CD8-positive, alpha-beta T cell (primary cell): ENCODE measurements at regions of chr22 and their contacts with region 1.

Region 1: GRCh38 chr22:39319270-39320022 is at the start of gene RPL3:
- DNase-seq: peak; percentile 96 to 100 (median 98)
- ATAC-seq: peak; percentile 85
- H3K4me3 ChIP-seq: peak within 1 kb of the TSS; percentile 91 to 99
- H3K4me3 Mint-ChIP-seq: peak within 1 kb of the TSS; percentile 96
- H3K27ac ChIP-seq: peak within 1 kb of the TSS; percentile 81 to 90
- H3K27ac Mint-ChIP-seq: peak within 1 kb of the TSS; percentile 96
- H3K4me1 ChIP-seq: peaks cover 45% of the 10 kb centered on the region
- H3K4me1 Mint-ChIP-seq: peaks cover 46% of the 10 kb centered on the region
- H3K27me3 ChIP-seq: no peaks in the 10 kb centered on the region
- H3K27me3 Mint-ChIP-seq: no peaks in the 10 kb centered on the region
- CTCF ChIP-seq: no peak
- total RNA-seq, gene RPL3: 3,777 to 3,874 TPM

Region 2: GRCh38 chr22:38398609-38399461 is 920.6 kb before region 1 on chr22:
- CTCF ChIA-PET with region 1: no interaction called
- POLR2A ChIA-PET with region 1: no interaction called
- intact Hi-C with region 1: loop called in 1 of 2 experiments (anchors 10 kb)
- DNase-seq: peak; percentile 67 to 91 (median 82)
- ATAC-seq: peak; percentile 79
- H3K4me3 ChIP-seq: peak overlapping the region; percentile 55 to 60
- H3K4me3 Mint-ChIP-seq: peak overlapping the region; percentile 81
- H3K27ac ChIP-seq: peak overlapping the region in 1 of 2 experiments; percentile 30
- H3K27ac Mint-ChIP-seq: no peak overlapping the region
- H3K4me1 ChIP-seq: no peaks in the 10 kb centered on the region
- H3K4me1 Mint-ChIP-seq: peaks cover 18% of the 10 kb centered on the region
- H3K27me3 ChIP-seq: no peaks in the 10 kb centered on the region
- H3K27me3 Mint-ChIP-seq: no peaks in the 10 kb centered on the region
- CTCF ChIP-seq: no peak

Region 3: GRCh38 chr22:38802671-38803121 is 516.8 kb before region 1 on chr22:
- CTCF ChIA-PET with region 1: no interaction called
- POLR2A ChIA-PET with region 1: no interaction called
- intact Hi-C with region 1: no loop called
- DNase-seq: no peak
- ATAC-seq: no peak
- H3K4me3 ChIP-seq: no peak overlapping the region
- H3K4me3 Mint-ChIP-seq: no peak overlapping the region
- H3K27ac ChIP-seq: no peak overlapping the region
- H3K27ac Mint-ChIP-seq: no peak overlapping the region
- H3K4me1 ChIP-seq: peaks cover 14% of the 10 kb centered on the region
- H3K4me1 Mint-ChIP-seq: peaks cover 16% of the 10 kb centered on the region
- H3K27me3 ChIP-seq: no peaks in the 10 kb centered on the region
- H3K27me3 Mint-ChIP-seq: peaks cover 15% of the 10 kb centered on the region
- CTCF ChIP-seq: no peak

Region 4: DNA sequence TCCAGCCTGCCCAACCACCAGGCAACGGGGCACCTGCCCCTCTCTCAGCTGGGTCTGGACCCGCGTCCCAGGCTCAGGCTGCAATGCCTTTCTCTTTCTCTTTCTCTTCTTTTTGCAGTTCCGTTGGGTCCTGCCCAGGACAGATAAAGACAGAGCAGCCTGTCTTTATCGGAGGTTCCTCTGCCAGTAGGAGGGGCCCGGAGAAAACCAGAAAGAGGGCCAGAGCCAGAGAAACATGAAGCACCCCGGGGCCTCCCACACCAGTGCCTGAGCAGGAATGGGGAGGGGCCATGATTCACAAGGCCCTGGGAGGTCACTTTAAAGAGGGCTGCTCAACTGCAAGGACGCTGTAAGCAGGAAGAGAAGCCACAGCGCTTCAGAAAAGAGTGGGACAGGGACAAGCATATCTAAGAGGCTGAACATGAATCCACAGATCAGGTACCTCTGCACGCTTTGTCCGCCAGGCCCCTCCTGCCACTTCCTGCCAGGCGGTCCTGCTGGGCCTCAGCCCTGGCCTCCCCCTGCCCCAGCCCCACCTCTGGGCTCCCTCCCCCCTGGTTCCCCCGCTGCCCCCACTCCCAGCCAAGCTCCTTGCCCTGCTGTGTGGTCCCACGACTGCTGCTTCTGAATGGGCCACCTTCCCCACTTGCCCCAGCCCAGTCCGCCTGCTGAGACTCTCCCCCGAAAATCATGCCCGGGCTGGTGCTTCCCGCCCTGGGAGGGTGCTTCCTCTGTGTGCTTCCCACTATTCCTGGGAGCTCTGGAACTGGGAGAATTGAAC is 305.3 kb before region 1 on chr22 and contains the start of gene APOBEC3C:
- CTCF ChIA-PET with region 1: interaction called, 3 read pairs
- POLR2A ChIA-PET with region 1: interaction called, 3 read pairs
- intact Hi-C with region 1: loop called in 1 of 2 experiments (anchors 5 kb)
- DNase-seq: peak; percentile 35 to 89 (median 78)
- ATAC-seq: peak; percentile 89
- H3K4me3 ChIP-seq: peak within 1 kb of the TSS; percentile 47 to 62
- H3K4me3 Mint-ChIP-seq: peak within 1 kb of the TSS; percentile 88
- H3K27ac ChIP-seq: peak within 1 kb of the TSS; percentile 33 to 83
- H3K27ac Mint-ChIP-seq: peak within 1 kb of the TSS; percentile 91
- H3K4me1 ChIP-seq: peaks cover 18% of the 10 kb centered on the region
- H3K4me1 Mint-ChIP-seq: peaks cover 36% of the 10 kb centered on the region
- H3K27me3 ChIP-seq: no peaks in the 10 kb centered on the region
- H3K27me3 Mint-ChIP-seq: no peaks in the 10 kb centered on the region
- CTCF ChIP-seq: no peak
- total RNA-seq, gene APOBEC3C: 14.1 to 15.8 TPM

Region 5: DNA sequence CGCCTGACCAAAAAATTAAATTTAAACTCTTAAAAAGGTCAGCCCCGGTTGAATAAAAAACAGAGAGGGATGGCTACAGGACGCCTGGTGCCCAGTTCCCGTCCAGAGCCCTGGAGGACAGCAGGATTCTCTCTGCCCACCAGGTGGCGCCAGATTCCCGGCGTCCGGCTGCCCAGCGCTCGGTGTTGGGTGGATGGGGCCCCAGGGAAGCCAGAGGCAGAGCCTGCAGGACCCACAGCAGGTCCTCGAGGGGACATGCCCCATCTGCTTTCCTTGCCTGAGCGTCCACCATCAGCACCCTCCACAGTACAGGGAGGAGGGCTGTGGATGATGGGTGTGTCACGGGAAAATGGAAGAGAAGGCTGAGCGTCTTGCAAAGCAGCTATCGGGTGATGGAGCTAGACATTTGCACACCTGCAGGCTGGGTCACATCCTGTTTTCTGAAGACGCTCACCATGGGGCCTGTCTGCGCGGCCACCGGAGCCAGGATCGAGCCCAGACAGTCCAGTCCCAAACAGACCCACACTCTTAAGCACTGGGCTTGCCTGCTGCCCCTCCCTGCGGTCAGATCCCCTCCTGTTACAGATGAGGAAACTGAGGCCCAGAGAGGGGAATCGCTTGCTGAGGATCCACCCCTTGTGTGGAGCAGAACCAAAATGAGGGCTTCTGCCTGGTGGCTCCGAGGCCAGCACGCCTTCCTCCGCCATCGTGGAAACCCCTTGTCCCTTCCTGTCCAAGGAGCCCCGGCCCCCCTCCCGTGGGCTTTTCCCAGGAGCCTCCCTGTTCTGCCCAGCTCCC is 148.4 kb before region 1 on chr22:
- CTCF ChIA-PET with region 1: interaction called, 386 read pairs
- POLR2A ChIA-PET with region 1: interaction called, 160 read pairs
- intact Hi-C with region 1: loop called (anchors 1 kb)
- DNase-seq: peak; percentile 73 to 95 (median 85)
- ATAC-seq: peak; percentile 57
- H3K4me3 ChIP-seq: peak overlapping the region; percentile 26 to 28
- H3K4me3 Mint-ChIP-seq: peak overlapping the region; percentile 54
- H3K27ac ChIP-seq: peak overlapping the region; percentile 25 to 42
- H3K27ac Mint-ChIP-seq: peak overlapping the region; percentile 94
- H3K4me1 ChIP-seq: peaks cover 49% of the 10 kb centered on the region
- H3K4me1 Mint-ChIP-seq: peaks cover 47% of the 10 kb centered on the region
- H3K27me3 ChIP-seq: peaks cover 0 to 3% of the 10 kb centered on the region in 2 experiments
- H3K27me3 Mint-ChIP-seq: no peaks in the 10 kb centered on the region
- CTCF ChIP-seq: peak; percentile 98

Region 6: DNA sequence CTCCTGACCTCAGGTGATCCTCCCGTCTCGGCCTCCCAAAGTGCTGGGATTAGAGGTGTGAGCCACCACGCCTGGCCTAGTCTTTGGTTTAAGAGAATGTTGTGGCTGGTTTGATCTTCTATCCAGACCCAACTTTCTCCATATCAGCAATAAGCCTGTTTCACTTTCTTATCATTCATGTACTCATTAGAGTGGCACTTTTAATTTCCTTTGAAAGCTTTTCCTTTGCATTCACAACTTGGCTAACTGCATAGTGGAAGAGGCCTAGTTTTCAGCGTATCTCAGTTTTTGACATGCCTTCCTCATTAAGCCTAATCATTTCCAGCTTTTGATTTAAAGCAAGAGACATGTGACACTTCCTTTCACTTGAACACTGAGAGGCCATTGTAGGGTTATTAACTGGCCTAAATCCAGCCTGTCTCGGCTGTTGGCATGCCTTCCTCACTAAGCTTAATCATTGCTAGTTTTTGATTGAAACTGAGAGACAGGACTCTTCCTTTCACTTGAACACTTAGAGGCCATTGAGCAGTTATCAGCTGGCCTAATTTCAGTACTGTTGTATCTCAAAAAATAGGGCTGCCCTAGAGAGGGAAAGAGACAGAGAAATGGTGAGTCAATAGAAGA is 13.1 kb after region 1 on chr22:
- CTCF ChIA-PET with region 1: interaction called, 9 read pairs
- POLR2A ChIA-PET with region 1: interaction called, 12 read pairs
- intact Hi-C with region 1: no loop called
- DNase-seq: no peak
- ATAC-seq: no peak
- H3K4me3 ChIP-seq: no peak overlapping the region
- H3K4me3 Mint-ChIP-seq: no peak overlapping the region
- H3K27ac ChIP-seq: no peak overlapping the region
- H3K27ac Mint-ChIP-seq: no peak overlapping the region
- H3K4me1 ChIP-seq: no peaks in the 10 kb centered on the region
- H3K4me1 Mint-ChIP-seq: peaks cover 7% of the 10 kb centered on the region
- H3K27me3 ChIP-seq: no peaks in the 10 kb centered on the region
- H3K27me3 Mint-ChIP-seq: no peaks in the 10 kb centered on the region
- CTCF ChIP-seq: no peak

Region 7: DNA sequence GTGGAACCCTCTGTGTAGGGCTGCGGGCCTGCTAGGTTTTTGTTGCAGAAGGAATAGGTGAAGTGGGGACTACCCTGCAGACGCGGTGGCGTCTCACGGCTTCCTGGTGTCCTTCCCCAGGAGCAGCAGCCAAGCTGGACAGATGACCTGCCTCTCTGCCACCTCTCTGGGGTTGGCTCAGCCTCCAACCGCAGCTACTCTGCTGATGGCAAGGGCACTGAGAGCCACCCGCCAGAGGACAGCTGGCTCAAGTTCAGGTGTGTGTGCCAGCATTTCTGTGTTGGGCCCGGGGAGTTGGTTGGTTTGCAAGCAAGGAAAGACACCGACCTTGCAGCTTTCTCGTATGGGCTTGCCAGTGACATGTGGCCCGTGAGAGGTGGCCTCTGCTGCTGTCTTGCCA is 95.4 kb after region 1 on chr22:
- CTCF ChIA-PET with region 1: no interaction called
- POLR2A ChIA-PET with region 1: interaction called, 16 read pairs
- intact Hi-C with region 1: no loop called
- DNase-seq: no peak
- ATAC-seq: no peak
- H3K4me3 ChIP-seq: peak overlapping the region; percentile 0 to 17
- H3K4me3 Mint-ChIP-seq: peak overlapping the region; percentile 63
- H3K27ac ChIP-seq: no peak overlapping the region
- H3K27ac Mint-ChIP-seq: peak overlapping the region; percentile 75
- H3K4me1 ChIP-seq: peaks cover 68% of the 10 kb centered on the region
- H3K4me1 Mint-ChIP-seq: peaks cover 62% of the 10 kb centered on the region
- H3K27me3 ChIP-seq: no peaks in the 10 kb centered on the region
- H3K27me3 Mint-ChIP-seq: no peaks in the 10 kb centered on the region
- CTCF ChIP-seq: no peak